HCT116 (cell line): ENCODE measurements at regions of chr22 and their contacts with region 1.

Region 1: DNA sequence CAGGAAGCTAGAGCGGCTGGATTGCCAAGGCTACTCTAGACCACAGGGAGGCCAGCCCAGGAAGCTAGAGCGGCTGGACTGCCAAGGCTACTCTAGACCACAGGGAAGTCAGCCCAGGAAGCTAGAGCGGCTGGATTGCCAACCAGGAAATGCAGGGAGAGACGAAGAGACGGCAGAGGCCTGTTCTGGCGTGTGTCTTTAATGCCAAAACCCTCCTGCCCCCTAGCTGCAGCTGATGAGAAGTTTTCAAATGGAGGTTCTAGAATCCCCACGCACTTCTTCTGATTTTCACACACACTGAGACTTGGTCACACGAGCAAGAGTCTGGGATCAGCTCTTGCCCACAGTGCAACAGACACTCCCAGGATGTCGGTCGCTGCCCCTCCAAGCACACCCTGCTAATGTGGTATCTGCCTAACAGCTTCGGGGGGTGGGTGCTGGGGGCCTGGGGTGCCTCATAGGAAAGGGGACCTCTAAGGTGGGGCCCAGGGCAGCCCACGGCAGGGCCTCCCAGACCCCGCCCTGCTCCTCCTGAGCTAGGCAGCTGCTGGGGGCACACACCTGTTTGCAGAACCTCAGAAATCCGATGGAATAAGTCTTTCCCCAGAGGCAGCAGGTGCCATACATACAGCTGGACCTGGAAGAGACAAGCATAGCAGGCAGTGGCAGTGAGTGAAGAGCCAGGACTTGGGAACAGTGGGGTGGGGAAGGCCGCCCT is 28.5 kb downstream of the MAFF start:
- DNase-seq: no peak
- ATAC-seq: peak; percentile 35
- H3K4me3 ChIP-seq: no peak overlapping the region
- H3K27ac ChIP-seq: peak overlapping the region; percentile 60
- H3K4me1 ChIP-seq: peaks cover 22 to 28% of the 10 kb centered on the region in 2 experiments
- H3K27me3 ChIP-seq: no peaks in the 10 kb centered on the region
- CTCF ChIP-seq: peak; percentile 52 to 59 (median 54); a peak in 5 of 6 replicates
- POLR2A ChIP-seq: no peak
- RAD21 ChIP-seq: peak; percentile 76

Region 2: GRCh38 chr22:38114484-38115398 is 115.5 kb before region 1 on chr22:
- CTCF ChIA-PET with region 1: interaction called, 12 read pairs
- POLR2A ChIA-PET with region 1: no interaction called
- RAD21 ChIA-PET with region 1: interaction called in 1 of 2 experiments, 5 read pairs
- intact Hi-C with region 1: loop called (anchors 10 kb)
- DNase-seq: peak; percentile 37
- ATAC-seq: peak; percentile 96
- H3K4me3 ChIP-seq: no peak overlapping the region
- H3K27ac ChIP-seq: no peak overlapping the region
- H3K4me1 ChIP-seq: peaks cover 11 to 17% of the 10 kb centered on the region in 2 experiments
- H3K27me3 ChIP-seq: no peaks in the 10 kb centered on the region
- CTCF ChIP-seq: peak; percentile 73 to 98 (median 95); a peak in 5 of 6 replicates
- POLR2A ChIP-seq: no peak
- RAD21 ChIP-seq: peak; percentile 83

Region 3: GRCh38 chr22:38513063-38513462 is 282.8 kb after region 1 on chr22:
- CTCF ChIA-PET with region 1: no interaction called
- POLR2A ChIA-PET with region 1: no interaction called
- RAD21 ChIA-PET with region 1: no interaction called
- intact Hi-C with region 1: no loop called
- DNase-seq: no peak
- ATAC-seq: peak; percentile 79
- H3K4me3 ChIP-seq: no peak overlapping the region
- H3K27ac ChIP-seq: no peak overlapping the region
- H3K4me1 ChIP-seq: peaks cover 3 to 10% of the 10 kb centered on the region in 2 experiments; a peak in 3 of 4 replicates
- H3K27me3 ChIP-seq: no peaks in the 10 kb centered on the region
- CTCF ChIP-seq: peak in 2 of 3 experiments; percentile 31 to 32; a peak in 1 of 6 replicates
- POLR2A ChIP-seq: no peak
- RAD21 ChIP-seq: peak; percentile 26; the same call in 1 of the 2 replicates